ENCODE measurements at regions of chr11 and their contacts with region 1.

Region 1: DNA sequence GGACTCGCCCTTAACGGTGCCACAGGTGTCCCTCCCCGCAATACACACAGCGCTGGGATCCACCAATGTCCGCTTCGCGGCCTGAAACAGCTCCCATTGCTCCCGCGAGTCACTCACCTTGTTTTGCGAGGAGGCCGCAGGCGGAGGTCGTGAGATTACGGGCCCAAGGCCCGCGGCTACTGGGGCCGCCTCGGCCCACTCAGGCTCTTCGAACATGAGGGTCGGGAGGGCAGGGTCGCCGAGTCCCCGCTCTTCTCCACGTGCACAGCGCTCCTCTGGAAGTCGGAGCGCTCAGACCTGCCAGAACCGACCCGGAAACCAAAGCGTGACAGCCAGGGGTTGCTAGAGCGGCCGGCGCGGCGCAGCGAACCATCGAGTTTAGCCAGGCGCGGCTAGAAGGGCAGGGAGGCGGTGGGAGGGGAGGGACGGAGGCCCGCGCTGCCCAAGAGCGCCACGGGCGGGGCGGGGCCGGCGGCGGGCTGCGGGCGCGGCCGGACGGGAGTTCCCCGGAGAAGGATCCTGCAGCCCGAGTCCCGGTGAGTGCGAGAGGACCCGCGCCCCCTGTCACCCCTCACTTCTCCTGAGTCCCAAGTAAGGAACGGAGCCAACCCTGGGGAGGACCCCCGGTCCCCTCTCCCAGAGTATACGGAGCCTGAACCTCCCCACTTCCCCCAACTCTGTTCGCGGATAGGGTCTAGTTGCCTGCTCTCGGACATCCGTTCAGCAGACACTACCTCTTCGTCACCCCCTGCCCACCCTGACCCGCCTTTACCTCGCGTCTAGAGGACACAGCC is at the starts of genes ILK and RRP8:
- DNase-seq: peak; percentile 73 to 94 (median 83)
- ATAC-seq: peak; percentile 75
- H3K4me3 ChIP-seq: peak within 1 kb of the TSS; percentile 78
- H3K4me3 Mint-ChIP-seq: no peak within 1 kb of the TSS
- H3K27ac ChIP-seq: peak within 1 kb of the TSS; percentile 81 to 87
- H3K27ac Mint-ChIP-seq: no peak within 1 kb of the TSS
- H3K4me1 ChIP-seq: peaks cover 73% of the 10 kb centered on the region
- H3K4me1 Mint-ChIP-seq: peaks cover 22% of the 10 kb centered on the region
- H3K27me3 ChIP-seq: no peaks in the 10 kb centered on the region
- H3K27me3 Mint-ChIP-seq: no peaks in the 10 kb centered on the region
- CTCF ChIP-seq: no peak
- total RNA-seq, gene ILK: 19.2 to 21.0 TPM
- total RNA-seq, gene RRP8: 25.7 to 27.3 TPM

Region 2: GRCh38 chr11:6362873-6363678 is 240.4 kb before region 1 on chr11:
- CTCF ChIA-PET with region 1: no interaction called
- POLR2A ChIA-PET with region 1: no interaction called
- intact Hi-C with region 1: no loop called
- DNase-seq: peak; percentile 42 to 77 (median 56)
- ATAC-seq: peak; percentile 89
- H3K4me3 ChIP-seq: no peak overlapping the region
- H3K4me3 Mint-ChIP-seq: no peak overlapping the region
- H3K27ac ChIP-seq: no peak overlapping the region
- H3K27ac Mint-ChIP-seq: no peak overlapping the region
- H3K4me1 ChIP-seq: no peaks in the 10 kb centered on the region
- H3K4me1 Mint-ChIP-seq: peaks cover 4% of the 10 kb centered on the region
- H3K27me3 ChIP-seq: peaks cover 0 to 2% of the 10 kb centered on the region in 2 experiments
- H3K27me3 Mint-ChIP-seq: no peaks in the 10 kb centered on the region
- CTCF ChIP-seq: peak; percentile 62

Region 3: GRCh38 chr11:6481012-6481923 is 122.2 kb before region 1 on chr11 and contains the starts of genes ARFIP2 and TIMM10B:
- CTCF ChIA-PET with region 1: no interaction called
- POLR2A ChIA-PET with region 1: interaction called, 7 read pairs
- intact Hi-C with region 1: loop called (anchors 5 kb)
- DNase-seq: peak; percentile 92 to 99 (median 96)
- ATAC-seq: peak; percentile 94
- H3K4me3 ChIP-seq: peak within 1 kb of the TSS; percentile 83
- H3K4me3 Mint-ChIP-seq: peak within 1 kb of the TSS; percentile 98
- H3K27ac ChIP-seq: peak within 1 kb of the TSS; percentile 87 to 95
- H3K27ac Mint-ChIP-seq: peak within 1 kb of the TSS; percentile 99
- H3K4me1 ChIP-seq: peaks cover 39% of the 10 kb centered on the region
- H3K4me1 Mint-ChIP-seq: peaks cover 42% of the 10 kb centered on the region
- H3K27me3 ChIP-seq: no peaks in the 10 kb centered on the region
- H3K27me3 Mint-ChIP-seq: no peaks in the 10 kb centered on the region
- CTCF ChIP-seq: no peak
- total RNA-seq, gene ARFIP2: 78.1 to 80.5 TPM
- total RNA-seq, gene TIMM10B: 68.5 to 68.6 TPM

Region 4: GRCh38 chr11:6667733-6668374 is 64.4 kb after region 1 on chr11:
- CTCF ChIA-PET with region 1: interaction called, 9 read pairs
- POLR2A ChIA-PET with region 1: interaction called, 9 read pairs
- intact Hi-C with region 1: loop called in 1 of 2 experiments (anchors 1 kb)
- DNase-seq: peak in 6 of 14 experiments; percentile 12 to 82 (median 58)
- ATAC-seq: peak; percentile 80
- H3K4me3 ChIP-seq: no peak overlapping the region
- H3K4me3 Mint-ChIP-seq: no peak overlapping the region
- H3K27ac ChIP-seq: peak overlapping the region in 1 of 2 donors; percentile 35
- H3K27ac Mint-ChIP-seq: peak overlapping the region; percentile 41
- H3K4me1 ChIP-seq: peaks cover 32% of the 10 kb centered on the region
- H3K4me1 Mint-ChIP-seq: peaks cover 52% of the 10 kb centered on the region
- H3K27me3 ChIP-seq: no peaks in the 10 kb centered on the region
- H3K27me3 Mint-ChIP-seq: no peaks in the 10 kb centered on the region
- CTCF ChIP-seq: peak; percentile 67

Region 5: GRCh38 chr11:6705905-6706535 is 102.5 kb after region 1 on chr11:
- CTCF ChIA-PET with region 1: interaction called, 4 read pairs
- POLR2A ChIA-PET with region 1: interaction called, 5 read pairs
- intact Hi-C with region 1: loop called in 1 of 2 experiments (anchors 2 kb)
- DNase-seq: peak in 11 of 14 experiments; percentile 11 to 72 (median 21)
- ATAC-seq: peak; percentile 88
- H3K4me3 ChIP-seq: no peak overlapping the region
- H3K4me3 Mint-ChIP-seq: no peak overlapping the region
- H3K27ac ChIP-seq: no peak overlapping the region
- H3K27ac Mint-ChIP-seq: peak overlapping the region; percentile 78
- H3K4me1 ChIP-seq: no peaks in the 10 kb centered on the region
- H3K4me1 Mint-ChIP-seq: peaks cover 30% of the 10 kb centered on the region
- H3K27me3 ChIP-seq: no peaks in the 10 kb centered on the region
- H3K27me3 Mint-ChIP-seq: no peaks in the 10 kb centered on the region
- CTCF ChIP-seq: peak; percentile 99

Region 6: GRCh38 chr11:6812390-6813005 is 209.0 kb after region 1 on chr11:
- CTCF ChIA-PET with region 1: no interaction called
- POLR2A ChIA-PET with region 1: no interaction called
- intact Hi-C with region 1: no loop called
- DNase-seq: peak in 9 of 14 experiments; percentile 1 to 68 (median 18)
- ATAC-seq: peak; percentile 88
- H3K4me3 ChIP-seq: no peak overlapping the region
- H3K4me3 Mint-ChIP-seq: no peak overlapping the region
- H3K27ac ChIP-seq: no peak overlapping the region
- H3K27ac Mint-ChIP-seq: no peak overlapping the region
- H3K4me1 ChIP-seq: peaks cover 4% of the 10 kb centered on the region
- H3K4me1 Mint-ChIP-seq: no peaks in the 10 kb centered on the region
- H3K27me3 ChIP-seq: no peaks in the 10 kb centered on the region
- H3K27me3 Mint-ChIP-seq: peaks cover 49% of the 10 kb centered on the region
- CTCF ChIP-seq: peak; percentile 91

Measured in CD4-positive, alpha-beta T cell (primary cell).